RWPE1 (cell line): ENCODE measurements at regions of chr13 and their contacts with region 1.

Region 1: GRCh38 chr13:99176309-99177276 is 24.1 kb upstream of the UBAC2 start:
- DNase-seq: peak; percentile 75
- H3K27ac ChIP-seq: no peak overlapping the region
- CTCF ChIP-seq: peak; percentile 87

Region 2: DNA sequence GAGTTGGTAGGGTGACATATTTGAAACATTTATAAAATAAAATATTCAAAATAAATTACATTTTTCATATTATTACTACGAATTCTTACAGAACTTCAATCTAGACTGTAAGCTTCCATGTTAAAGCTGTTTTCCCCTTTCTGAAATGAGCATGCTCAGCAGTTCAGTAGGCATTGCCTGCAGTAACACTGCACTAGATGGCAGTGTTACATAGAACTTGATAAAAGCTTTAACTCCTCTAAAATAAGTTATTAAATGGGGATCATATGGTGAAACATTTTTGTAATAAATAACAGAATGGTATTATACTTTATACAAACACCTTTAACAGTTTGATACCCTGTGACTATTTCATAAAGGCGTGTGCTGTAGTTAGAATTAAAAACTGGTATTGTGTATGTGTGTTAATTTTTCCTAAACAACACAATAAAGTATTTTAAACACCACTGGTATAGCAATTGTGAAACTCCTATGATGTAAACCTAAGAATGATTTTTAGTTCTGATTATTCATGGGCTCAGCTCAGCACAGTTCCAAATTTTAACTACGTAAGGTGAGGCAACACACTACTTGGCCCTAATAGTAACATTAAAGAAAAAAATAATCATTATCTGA is 93.1 kb after region 1 on chr13:
- CTCF ChIA-PET with region 1: interaction called, 15 read pairs
- POLR2A ChIA-PET with region 1: no interaction called
- DNase-seq: peak; percentile 20
- H3K27ac ChIP-seq: no peak overlapping the region
- CTCF ChIP-seq: peak; percentile 61

Region 3: DNA sequence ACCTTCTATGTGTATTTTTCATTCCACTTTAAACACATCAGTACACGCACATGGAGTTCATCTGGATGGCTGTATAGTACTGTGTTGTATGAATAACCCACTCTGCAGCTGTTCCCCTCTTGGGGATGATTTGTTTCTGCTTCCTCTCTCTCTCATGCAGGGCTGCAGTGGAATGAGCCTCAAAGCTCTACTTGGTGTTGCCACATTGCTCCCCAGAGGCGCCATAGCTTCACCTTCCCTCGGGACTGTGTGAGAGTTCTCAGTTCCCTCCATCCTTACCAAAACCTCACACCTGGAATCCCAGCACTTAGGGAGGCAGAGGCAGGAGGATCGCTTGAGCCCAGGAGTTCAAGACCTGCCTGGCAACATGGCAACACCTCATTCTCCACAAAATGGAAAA is 159.0 kb after region 1 on chr13:
- CTCF ChIA-PET with region 1: no interaction called
- POLR2A ChIA-PET with region 1: no interaction called
- DNase-seq: no peak
- H3K27ac ChIP-seq: no peak overlapping the region
- CTCF ChIP-seq: no peak

Region 4: DNA sequence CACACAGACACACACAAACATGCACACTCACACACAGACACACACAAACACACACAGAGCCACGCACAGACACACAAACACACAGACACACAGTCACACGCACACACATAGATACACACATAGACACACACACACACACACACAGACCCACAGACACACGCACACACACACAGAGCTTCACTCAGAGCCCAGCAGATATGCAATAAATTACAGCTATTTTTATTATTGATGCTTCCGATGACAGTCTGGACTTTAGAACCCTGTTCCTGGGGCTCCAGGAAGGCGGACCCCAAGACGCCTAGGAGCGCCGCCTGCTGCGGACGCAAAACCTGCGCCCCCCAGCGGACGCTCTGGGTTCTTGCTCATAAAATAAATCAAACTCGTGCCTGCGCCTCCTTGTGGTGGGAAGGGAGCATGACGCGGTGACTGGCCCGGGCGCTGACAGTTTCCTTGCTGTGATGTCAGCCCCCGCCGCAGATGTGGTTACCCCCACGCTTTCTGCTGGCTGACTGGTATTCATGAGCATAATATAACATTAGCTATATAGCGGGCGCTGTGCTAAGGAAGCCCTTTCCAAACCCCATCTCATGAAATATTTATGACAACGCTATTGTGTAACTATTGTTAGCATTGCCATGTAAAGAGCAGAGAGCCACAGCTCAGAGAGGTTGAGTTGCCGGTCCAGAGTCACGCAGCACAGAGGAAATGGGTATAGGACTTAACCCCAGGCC is 260.3 kb after region 1 on chr13:
- CTCF ChIA-PET with region 1: interaction called, 17 read pairs
- POLR2A ChIA-PET with region 1: no interaction called
- DNase-seq: peak; percentile 66
- H3K27ac ChIP-seq: no peak overlapping the region
- CTCF ChIP-seq: peak; percentile 99